ENCODE measurements at regions of chr7 and their contacts with region 1.

Region 1: DNA sequence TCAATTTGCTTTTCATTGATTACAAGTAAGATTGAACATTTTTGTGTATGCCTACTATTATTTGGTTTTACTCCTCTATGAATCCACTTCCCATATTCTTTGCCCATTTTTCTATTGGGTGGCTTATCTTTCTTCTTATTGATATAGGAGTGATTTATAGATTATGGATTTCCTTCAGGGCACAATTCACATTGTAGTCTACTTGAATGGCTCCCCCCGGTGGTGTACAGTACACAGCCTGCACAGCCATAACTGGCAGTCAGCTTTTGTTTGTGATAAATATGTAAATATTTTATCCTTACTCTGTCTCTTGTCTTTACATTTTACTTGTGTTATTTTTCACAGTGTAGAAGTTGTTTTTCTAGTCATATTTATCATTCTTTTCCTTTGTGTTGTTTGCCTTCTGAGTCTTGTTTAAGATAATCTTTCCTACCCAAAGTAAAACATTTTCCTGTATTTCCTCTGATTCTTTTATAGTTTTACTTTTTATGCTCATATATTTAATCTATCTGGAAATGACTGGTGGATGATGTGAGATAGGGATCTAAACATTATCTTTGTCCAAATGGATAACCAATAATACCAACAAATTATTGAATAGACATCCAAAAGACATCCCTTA is 23.9 kb upstream of the CALD1 start:
- DNase-seq: peak; percentile 3
- H3K4me3 Mint-ChIP-seq: no peak overlapping the region
- H3K27ac Mint-ChIP-seq: no peak overlapping the region
- H3K4me1 Mint-ChIP-seq: peaks cover 7% of the 10 kb centered on the region
- H3K27me3 Mint-ChIP-seq: no peaks in the 10 kb centered on the region

Region 2: GRCh38 chr7:134632937-134633540 is 122.5 kb before region 1 on chr7:
- intact Hi-C with region 1: loop called (anchors 1 kb)
- DNase-seq: no peak
- H3K4me3 Mint-ChIP-seq: no peak overlapping the region
- H3K27ac Mint-ChIP-seq: no peak overlapping the region
- H3K4me1 Mint-ChIP-seq: peaks cover 20% of the 10 kb centered on the region
- H3K27me3 Mint-ChIP-seq: peaks cover 5% of the 10 kb centered on the region

Region 3: GRCh38 chr7:134690016-134690415 is 65.5 kb before region 1 on chr7:
- intact Hi-C with region 1: loop called (anchors 1 kb)
- DNase-seq: no peak
- H3K4me3 Mint-ChIP-seq: no peak overlapping the region
- H3K27ac Mint-ChIP-seq: no peak overlapping the region
- H3K4me1 Mint-ChIP-seq: peaks cover 6% of the 10 kb centered on the region
- H3K27me3 Mint-ChIP-seq: peaks cover 4% of the 10 kb centered on the region

Region 4: GRCh38 chr7:134724606-134725005 is 30.9 kb before region 1 on chr7:
- intact Hi-C with region 1: loop called (anchors 1 kb)
- DNase-seq: no peak
- H3K4me3 Mint-ChIP-seq: no peak overlapping the region
- H3K27ac Mint-ChIP-seq: no peak overlapping the region
- H3K4me1 Mint-ChIP-seq: no peaks in the 10 kb centered on the region
- H3K27me3 Mint-ChIP-seq: peaks cover 6% of the 10 kb centered on the region

Region 5: DNA sequence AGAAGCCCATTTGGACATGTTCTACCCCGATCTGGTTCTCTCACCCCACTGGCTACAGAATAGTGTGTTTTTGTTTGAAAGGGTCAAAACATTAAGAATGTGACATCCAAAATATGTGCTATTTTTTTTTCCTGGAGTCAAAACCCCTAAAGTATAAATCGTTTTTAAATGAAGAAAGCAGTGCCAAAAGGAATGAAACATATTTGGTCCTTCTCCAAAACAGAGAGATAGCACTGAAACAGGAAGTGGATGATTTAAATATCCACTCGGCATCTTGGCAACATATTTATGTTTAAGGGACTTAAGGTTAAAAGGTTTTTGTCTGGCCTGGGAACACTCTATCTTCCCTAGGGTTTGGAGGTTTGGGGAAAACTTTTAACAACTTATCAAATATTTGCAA is 56.3 kb after region 1 on chr7:
- intact Hi-C with region 1: no loop called
- DNase-seq: no peak
- H3K4me3 Mint-ChIP-seq: no peak overlapping the region
- H3K27ac Mint-ChIP-seq: no peak overlapping the region
- H3K4me1 Mint-ChIP-seq: no peaks in the 10 kb centered on the region
- H3K27me3 Mint-ChIP-seq: peaks cover 3% of the 10 kb centered on the region

Region 6: DNA sequence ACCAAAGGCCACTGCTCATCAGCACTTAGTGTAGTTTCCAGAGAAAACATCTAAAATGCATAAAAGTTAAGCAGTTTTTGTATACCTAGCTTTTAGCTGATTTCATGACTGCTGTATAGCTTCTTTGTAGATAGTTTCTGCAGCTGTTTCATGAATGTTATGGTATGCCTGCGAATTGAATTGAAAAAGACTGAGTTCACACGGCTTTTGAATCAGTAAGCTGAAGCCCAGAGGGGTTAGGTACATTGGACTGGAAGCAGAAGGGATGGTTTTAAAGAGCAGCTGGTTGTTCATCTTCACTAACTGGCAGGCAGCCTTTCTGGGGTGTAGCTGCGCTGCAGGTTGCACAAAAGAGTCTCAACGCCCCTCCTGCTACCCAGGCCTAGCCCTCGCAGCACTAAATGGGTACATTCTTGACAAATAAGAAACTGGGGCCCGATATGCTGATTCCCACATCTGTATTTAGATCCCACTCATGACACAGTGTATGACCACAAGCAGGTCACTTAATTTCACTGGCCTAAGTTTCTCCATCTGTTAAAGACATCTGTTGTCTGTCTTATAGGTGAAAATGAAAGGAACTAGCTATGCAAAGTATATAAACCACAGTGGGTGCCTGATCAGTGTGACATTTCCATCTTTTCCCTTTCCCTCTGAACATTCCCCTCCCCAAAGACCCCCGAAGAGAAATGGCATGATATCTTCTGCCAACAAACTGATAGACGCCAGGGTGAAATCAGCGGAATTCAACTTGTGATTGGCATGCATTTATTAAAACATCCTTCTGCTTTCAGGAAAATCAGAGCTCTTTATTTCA is 144.9 kb after region 1 on chr7:
- intact Hi-C with region 1: no loop called
- DNase-seq: no peak
- H3K4me3 Mint-ChIP-seq: no peak overlapping the region
- H3K27ac Mint-ChIP-seq: no peak overlapping the region
- H3K4me1 Mint-ChIP-seq: peaks cover 19% of the 10 kb centered on the region
- H3K27me3 Mint-ChIP-seq: no peaks in the 10 kb centered on the region